ENCODE measurements at regions of chr15 and their contacts with region 1.

Region 1: GRCh38 chr15:63891079-63891767 is 57.5 kb upstream of the HERC1 start:
- DNase-seq: peak; percentile 93
- H3K4me3 ChIP-seq: no peak overlapping the region
- H3K27ac ChIP-seq: peak overlapping the region in 7 of 8 donors; percentile 1 to 81 (median 59)
- H3K4me1 ChIP-seq: peaks cover 31 to 75% (median 60%) of the 10 kb centered on the region in 6 donors
- H3K27me3 ChIP-seq: no peaks in the 10 kb centered on the region
- CTCF ChIP-seq: peak; percentile 70 to 94 (median 87)
- POLR2A ChIP-seq: no peak

Region 2: DNA sequence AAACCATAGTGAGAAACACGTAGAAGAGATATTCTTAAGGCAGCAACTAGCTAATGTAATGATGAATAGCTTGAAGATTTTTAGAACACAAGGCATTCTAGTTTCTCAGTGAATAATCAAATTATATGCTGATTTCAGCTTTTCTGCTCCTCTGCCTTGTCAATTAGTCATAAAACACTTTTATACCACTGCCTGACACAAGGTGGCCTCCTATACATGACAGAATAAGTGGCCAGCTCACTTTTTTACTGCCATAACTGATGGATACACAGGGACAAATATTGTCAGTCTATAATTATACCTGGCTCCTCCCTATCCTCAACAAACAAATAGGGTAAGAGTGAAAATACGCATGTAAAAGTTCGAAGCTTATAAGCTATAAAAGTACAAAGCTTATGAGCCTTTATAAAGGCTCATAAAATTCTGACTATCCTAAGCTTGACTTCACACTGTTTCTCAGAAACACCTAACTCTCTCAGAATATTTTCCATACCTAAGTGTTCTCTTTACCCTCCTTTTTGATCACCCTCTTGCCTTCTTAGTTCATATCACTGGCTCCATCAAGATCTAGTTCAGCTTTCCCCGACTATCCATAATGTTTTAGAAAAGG is 139.0 kb before region 1 on chr15:
- intact Hi-C with region 1: loop called (anchors 10 kb)
- DNase-seq: no peak
- H3K4me3 ChIP-seq: no peak overlapping the region
- H3K27ac ChIP-seq: peak overlapping the region in 2 of 8 donors; percentile 27 to 38
- H3K4me1 ChIP-seq: peaks cover 0 to 9% (median 0%) of the 10 kb centered on the region in 6 donors
- H3K27me3 ChIP-seq: no peaks in the 10 kb centered on the region
- CTCF ChIP-seq: peak in 10 of 11 experiments; percentile 40 to 82 (median 72)
- POLR2A ChIP-seq: no peak

Region 3: DNA sequence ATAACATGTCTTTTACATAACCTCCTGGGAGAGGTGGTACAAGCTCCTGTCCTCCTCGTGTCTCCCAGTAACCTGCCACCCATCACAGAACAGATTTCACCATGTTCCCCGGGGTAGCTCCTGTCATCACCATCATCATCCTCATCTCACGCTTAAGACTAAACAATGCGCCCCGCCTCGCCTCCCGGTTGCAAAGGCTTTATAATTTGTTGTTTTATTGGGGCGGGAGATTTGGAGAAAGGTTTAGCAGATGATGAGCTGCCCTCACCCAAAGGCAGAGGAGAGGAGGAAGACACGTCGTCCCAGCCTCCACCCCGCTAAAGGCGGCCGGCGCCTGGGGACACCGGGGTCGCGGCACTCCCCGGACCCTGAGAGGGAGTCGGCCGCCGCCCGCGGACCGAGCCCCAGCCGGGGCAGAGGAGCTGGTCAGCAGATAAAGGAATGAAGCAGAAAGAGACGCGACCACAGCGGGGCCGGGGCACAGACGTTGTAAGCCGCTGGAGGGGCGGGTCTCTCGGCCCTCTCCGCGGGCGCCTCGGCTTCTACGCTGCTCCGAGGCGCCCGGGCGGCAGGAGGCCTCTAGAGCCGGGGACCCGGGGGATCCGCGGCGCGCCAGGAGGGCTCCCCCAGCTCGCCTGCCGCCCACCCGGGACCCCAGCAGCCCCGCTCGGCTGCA is 58.1 kb before region 1 on chr15:
- intact Hi-C with region 1: loop called (anchors 10 kb)
- DNase-seq: peak; percentile 89
- H3K4me3 ChIP-seq: peak overlapping the region; percentile 71 to 90 (median 80)
- H3K27ac ChIP-seq: peak overlapping the region; percentile 93 to 98 (median 96)
- H3K4me1 ChIP-seq: peaks cover 20 to 62% (median 50%) of the 10 kb centered on the region in 6 donors
- H3K27me3 ChIP-seq: no peaks in the 10 kb centered on the region
- CTCF ChIP-seq: no peak
- POLR2A ChIP-seq: no peak

Region 4: DNA sequence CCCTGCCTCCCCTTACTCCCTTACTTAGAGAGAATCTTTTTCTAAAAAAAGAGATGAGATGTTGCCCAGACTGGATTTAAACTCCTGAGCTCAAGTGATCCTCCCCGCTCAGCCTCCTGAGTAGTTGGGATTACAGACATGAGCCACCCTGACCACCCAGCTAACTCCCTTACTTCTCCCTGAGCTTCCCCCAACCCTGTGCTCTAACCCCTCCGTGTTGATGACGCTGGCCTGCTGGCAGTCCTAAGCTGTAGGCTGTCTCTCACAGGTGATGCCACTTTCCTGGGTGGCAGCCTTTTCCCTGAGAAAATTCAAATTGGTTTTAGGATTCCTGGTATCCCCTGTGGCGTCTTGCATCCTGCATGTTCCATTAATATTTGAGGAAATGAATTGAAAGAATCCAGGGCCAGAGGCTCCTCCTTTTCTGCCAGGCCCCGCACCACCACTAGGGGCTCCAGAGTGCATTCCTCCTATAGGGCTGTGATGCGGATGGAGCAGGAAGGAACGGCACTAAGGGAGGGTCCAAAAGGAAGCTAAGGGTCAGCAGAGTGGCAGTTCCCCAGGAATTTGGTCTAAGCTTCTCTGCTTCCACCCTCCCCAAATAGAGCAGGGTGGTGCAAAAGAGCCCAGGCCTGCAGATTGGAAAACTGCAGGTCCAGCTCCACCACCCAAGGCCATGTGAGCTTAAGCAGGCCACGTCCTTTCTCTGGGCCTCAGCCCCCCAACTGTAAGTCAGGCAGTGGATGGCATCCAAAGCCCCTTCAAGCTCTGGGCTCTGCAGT is 54.0 kb after region 1 on chr15:
- intact Hi-C with region 1: no loop called
- DNase-seq: peak; percentile 90
- H3K4me3 ChIP-seq: peak overlapping the region in 1 of 8 donors; percentile 7
- H3K27ac ChIP-seq: peak overlapping the region in 4 of 8 donors; percentile 51 to 58 (median 54)
- H3K4me1 ChIP-seq: peaks cover 12 to 53% (median 30%) of the 10 kb centered on the region in 6 donors
- H3K27me3 ChIP-seq: no peaks in the 10 kb centered on the region
- CTCF ChIP-seq: peak; percentile 71 to 97 (median 92)
- POLR2A ChIP-seq: no peak